CD4-positive, alpha-beta T cell (primary cell): ENCODE measurements at regions of chr2 and their contacts with region 1.

Region 1: DNA sequence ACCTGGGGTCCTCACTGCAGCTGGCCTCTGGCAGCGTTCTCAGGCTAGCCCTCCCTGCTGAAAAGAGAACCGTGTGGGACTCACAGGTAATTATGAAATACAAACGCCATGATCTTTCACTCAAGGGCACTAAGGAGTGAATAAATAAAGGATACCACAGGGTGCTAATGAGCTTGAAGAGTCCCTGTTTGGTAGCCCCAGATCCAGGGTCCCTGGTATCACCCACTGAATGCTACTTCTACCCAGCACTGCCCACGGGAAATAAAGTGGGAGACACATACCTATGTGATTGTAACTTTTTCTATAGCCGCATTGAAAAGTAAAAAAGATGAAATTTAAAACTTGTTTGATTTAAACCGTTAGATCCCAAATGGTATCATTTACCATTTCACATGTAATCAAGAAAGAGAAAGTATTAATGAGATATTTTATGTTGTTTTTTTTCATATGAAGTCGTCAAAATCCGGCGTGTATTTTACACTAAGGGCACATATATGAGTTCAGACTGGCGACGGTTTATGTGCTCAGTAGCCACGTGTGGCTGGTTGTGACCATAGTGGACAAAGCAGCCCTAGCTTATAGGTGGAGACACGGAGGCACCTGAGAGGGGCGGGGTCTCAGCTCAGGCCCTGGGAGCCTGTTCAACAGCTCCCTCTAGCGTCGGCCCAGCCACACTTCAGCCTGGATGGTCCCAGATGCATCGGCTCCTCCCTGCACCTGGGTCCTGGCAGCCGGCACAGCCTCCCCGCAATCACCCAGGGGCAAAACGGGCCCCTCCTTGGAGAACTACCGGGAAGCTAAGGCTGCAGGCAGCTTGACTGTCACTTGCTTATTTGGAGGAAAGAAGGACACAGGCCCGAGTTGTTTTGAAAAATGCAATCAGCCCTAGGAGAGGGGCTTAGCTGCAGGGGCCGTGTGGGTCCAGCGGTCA is 39.2 kb downstream of the ODC1 start:
- DNase-seq: peak; percentile 70 to 92 (median 78)
- ATAC-seq: peak; percentile 90
- H3K4me3 ChIP-seq: no peak overlapping the region
- H3K4me3 Mint-ChIP-seq: peak overlapping the region; percentile 83
- H3K27ac ChIP-seq: peak overlapping the region in 1 of 2 donors; percentile 55
- H3K27ac Mint-ChIP-seq: peak overlapping the region; percentile 87
- H3K4me1 ChIP-seq: peaks cover 51% of the 10 kb centered on the region
- H3K4me1 Mint-ChIP-seq: peaks cover 38% of the 10 kb centered on the region
- H3K27me3 ChIP-seq: no peaks in the 10 kb centered on the region
- H3K27me3 Mint-ChIP-seq: no peaks in the 10 kb centered on the region
- CTCF ChIP-seq: peak; percentile 94

Region 2: GRCh38 chr2:10141736-10142642 is 266.9 kb before region 1 on chr2:
- CTCF ChIA-PET with region 1: interaction called, 4 read pairs
- POLR2A ChIA-PET with region 1: interaction called, 8 read pairs
- intact Hi-C with region 1: loop called (anchors 5 kb)
- DNase-seq: peak in 9 of 14 experiments; percentile 24 to 61 (median 31)
- ATAC-seq: peak; percentile 76
- H3K4me3 ChIP-seq: no peak overlapping the region
- H3K4me3 Mint-ChIP-seq: peak overlapping the region; percentile 16
- H3K27ac ChIP-seq: no peak overlapping the region
- H3K27ac Mint-ChIP-seq: peak overlapping the region; percentile 27
- H3K4me1 ChIP-seq: peaks cover 22% of the 10 kb centered on the region
- H3K4me1 Mint-ChIP-seq: peaks cover 26% of the 10 kb centered on the region
- H3K27me3 ChIP-seq: no peaks in the 10 kb centered on the region
- H3K27me3 Mint-ChIP-seq: no peaks in the 10 kb centered on the region
- CTCF ChIP-seq: peak; percentile 51

Region 3: GRCh38 chr2:10302479-10303180 is 106.3 kb before region 1 on chr2 and contains the start of gene HPCAL1:
- CTCF ChIA-PET with region 1: interaction called, 38 read pairs
- POLR2A ChIA-PET with region 1: interaction called, 66 read pairs
- intact Hi-C with region 1: loop called (anchors 1 to 2 kb)
- DNase-seq: peak; percentile 60 to 91 (median 80)
- ATAC-seq: peak; percentile 62
- H3K4me3 ChIP-seq: peak within 1 kb of the TSS; percentile 92
- H3K4me3 Mint-ChIP-seq: peak within 1 kb of the TSS; percentile 98
- H3K27ac ChIP-seq: peak within 1 kb of the TSS; percentile 42 to 70
- H3K27ac Mint-ChIP-seq: peak within 1 kb of the TSS; percentile 84
- H3K4me1 ChIP-seq: peaks cover 65% of the 10 kb centered on the region
- H3K4me1 Mint-ChIP-seq: peaks cover 76% of the 10 kb centered on the region
- H3K27me3 ChIP-seq: no peaks in the 10 kb centered on the region
- H3K27me3 Mint-ChIP-seq: no peaks in the 10 kb centered on the region
- CTCF ChIP-seq: peak; percentile 76
- total RNA-seq, gene HPCAL1: 24.9 to 27.9 TPM

Region 4: DNA sequence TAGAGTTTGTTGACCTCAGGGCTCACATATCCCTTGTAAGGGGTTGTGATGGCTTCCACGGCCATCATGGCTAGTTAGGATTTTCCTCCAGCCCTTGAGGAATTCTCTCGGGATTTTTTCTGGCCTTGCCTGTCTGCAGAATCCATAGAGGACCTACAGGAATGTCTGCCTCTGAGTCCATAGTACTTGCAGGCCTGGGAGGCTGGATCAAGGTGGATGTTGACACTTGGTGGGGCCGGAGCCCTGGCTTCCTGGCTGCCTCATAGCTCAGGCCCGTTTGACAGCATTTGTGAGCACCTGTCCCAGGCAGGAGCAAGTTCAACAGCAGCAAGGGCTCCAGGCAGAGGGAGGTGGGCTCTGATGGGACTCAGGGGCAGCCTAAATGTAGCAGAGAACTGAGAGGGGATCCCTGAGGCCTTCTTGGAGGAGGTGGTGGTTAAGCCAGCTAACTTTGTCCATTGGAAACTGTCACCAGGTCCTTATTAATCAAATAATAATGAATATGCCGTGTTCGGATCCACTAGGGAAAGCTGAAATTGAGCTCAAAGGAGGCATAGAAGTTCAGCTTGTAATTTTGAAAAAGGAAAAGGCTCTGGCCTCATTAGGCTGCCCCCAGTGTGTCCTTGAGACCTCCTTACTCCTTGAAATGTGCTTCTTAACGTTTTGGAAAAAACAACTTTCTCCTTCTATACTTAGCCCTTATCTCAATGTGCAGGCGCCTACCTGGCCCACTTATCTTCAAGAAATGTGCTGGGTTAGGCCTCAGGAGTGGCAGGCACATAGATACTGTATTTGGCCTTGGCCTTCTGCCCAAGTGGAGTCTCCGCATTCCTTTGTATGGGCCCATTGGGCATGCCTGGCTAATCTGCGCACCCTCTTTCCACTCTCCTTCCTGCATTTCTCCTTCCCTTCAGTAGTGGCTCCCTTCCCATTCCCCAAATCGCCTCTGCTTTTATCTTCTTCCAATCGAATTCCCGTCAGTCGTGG is 39.4 kb before region 1 on chr2:
- CTCF ChIA-PET with region 1: no interaction called
- POLR2A ChIA-PET with region 1: no interaction called
- intact Hi-C with region 1: no loop called
- DNase-seq: no peak
- ATAC-seq: no peak
- H3K4me3 ChIP-seq: no peak overlapping the region
- H3K4me3 Mint-ChIP-seq: no peak overlapping the region
- H3K27ac ChIP-seq: peak overlapping the region in 1 of 2 donors; percentile 5
- H3K27ac Mint-ChIP-seq: peak overlapping the region; percentile 63
- H3K4me1 ChIP-seq: peaks cover 67% of the 10 kb centered on the region
- H3K4me1 Mint-ChIP-seq: peaks cover 58% of the 10 kb centered on the region
- H3K27me3 ChIP-seq: no peaks in the 10 kb centered on the region
- H3K27me3 Mint-ChIP-seq: no peaks in the 10 kb centered on the region
- CTCF ChIP-seq: no peak

Region 5: DNA sequence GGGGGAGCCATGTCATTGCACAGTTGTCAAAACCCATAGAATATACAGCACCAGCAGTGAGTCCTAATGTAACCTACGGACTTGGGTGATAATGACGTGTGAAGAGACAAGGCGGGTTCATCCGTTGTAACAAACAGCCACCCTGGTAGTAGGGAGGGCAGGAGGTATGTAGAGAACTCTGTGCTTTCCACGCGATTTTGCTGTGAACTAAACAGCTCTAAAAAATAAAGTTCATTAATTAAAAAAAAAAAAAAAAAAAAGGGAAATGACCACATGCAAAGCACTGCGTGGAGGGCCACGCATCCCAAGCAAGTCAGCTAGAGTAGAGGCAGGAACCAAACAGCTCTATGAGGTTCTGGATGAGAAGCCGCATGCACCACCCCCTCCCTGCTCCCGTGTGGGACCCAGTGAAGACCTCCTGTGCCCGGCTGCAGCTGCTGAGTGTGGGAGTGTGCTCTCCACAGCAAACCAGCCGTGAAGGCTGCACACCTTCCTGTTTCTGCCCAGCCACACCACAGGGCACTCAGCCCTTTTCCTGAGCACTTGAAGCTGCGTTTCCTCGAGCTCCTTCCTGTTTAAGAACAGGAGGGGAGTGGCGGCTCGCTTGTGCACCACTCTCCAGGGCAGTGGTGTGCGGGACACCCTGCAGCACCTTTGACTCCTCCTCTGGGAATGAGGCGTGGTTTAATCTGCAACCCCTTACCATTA is 26.4 kb before region 1 on chr2:
- CTCF ChIA-PET with region 1: interaction called, 6 read pairs
- POLR2A ChIA-PET with region 1: interaction called, 14 read pairs
- intact Hi-C with region 1: loop called in 1 of 2 experiments (anchors 1 kb)
- DNase-seq: peak; percentile 13 to 81 (median 34)
- ATAC-seq: peak; percentile 94
- H3K4me3 ChIP-seq: peak overlapping the region; percentile 46
- H3K4me3 Mint-ChIP-seq: peak overlapping the region; percentile 82
- H3K27ac ChIP-seq: peak overlapping the region; percentile 23 to 59
- H3K27ac Mint-ChIP-seq: peak overlapping the region; percentile 96
- H3K4me1 ChIP-seq: peaks cover 96% of the 10 kb centered on the region
- H3K4me1 Mint-ChIP-seq: peaks cover 93% of the 10 kb centered on the region
- H3K27me3 ChIP-seq: no peaks in the 10 kb centered on the region
- H3K27me3 Mint-ChIP-seq: no peaks in the 10 kb centered on the region
- CTCF ChIP-seq: no peak